ENCODE measurements at regions of chr4 and their contacts with region 1.

Region 1: GRCh38 chr4:128454281-128455075 is 166.9 kb upstream of the PGRMC2 start:
- DNase-seq: peak; percentile 76 to 84 (median 81)
- ATAC-seq: peak; percentile 72 to 93 (median 90)
- H3K4me3 ChIP-seq: peak overlapping the region in 2 of 12 donors; percentile 1
- H3K27ac ChIP-seq: peak overlapping the region in 1 of 12 donors; percentile 6
- H3K4me1 ChIP-seq: peaks cover 0 to 19% (median 10%) of the 10 kb centered on the region in 12 donors
- H3K27me3 ChIP-seq: no peaks in the 10 kb centered on the region
- CTCF ChIP-seq: peak; percentile 66 to 87 (median 81)
- POLR2A ChIP-seq: no peak

Region 2: GRCh38 chr4:128267745-128268144 is 186.7 kb before region 1 on chr4:
- intact Hi-C with region 1: no loop called
- DNase-seq: no peak
- ATAC-seq: no peak
- H3K4me3 ChIP-seq: no peak overlapping the region
- H3K27ac ChIP-seq: no peak overlapping the region
- H3K4me1 ChIP-seq: no peaks in the 10 kb centered on the region
- H3K27me3 ChIP-seq: no peaks in the 10 kb centered on the region
- CTCF ChIP-seq: no peak
- POLR2A ChIP-seq: no peak

Region 3: GRCh38 chr4:128524311-128524710 is 69.8 kb after region 1 on chr4:
- intact Hi-C with region 1: loop called in 1 of 10 experiments (anchors 2 kb)
- DNase-seq: peak in 3 of 5 donors; percentile 25 to 59 (median 44)
- ATAC-seq: peak in 2 of 4 donors; percentile 60 to 72
- H3K4me3 ChIP-seq: no peak overlapping the region
- H3K27ac ChIP-seq: peak overlapping the region in 8 of 12 donors; percentile 2 to 61 (median 30)
- H3K4me1 ChIP-seq: peaks cover 3 to 55% (median 26%) of the 10 kb centered on the region in 12 donors
- H3K27me3 ChIP-seq: no peaks in the 10 kb centered on the region
- CTCF ChIP-seq: no peak
- POLR2A ChIP-seq: no peak

Region 4: DNA sequence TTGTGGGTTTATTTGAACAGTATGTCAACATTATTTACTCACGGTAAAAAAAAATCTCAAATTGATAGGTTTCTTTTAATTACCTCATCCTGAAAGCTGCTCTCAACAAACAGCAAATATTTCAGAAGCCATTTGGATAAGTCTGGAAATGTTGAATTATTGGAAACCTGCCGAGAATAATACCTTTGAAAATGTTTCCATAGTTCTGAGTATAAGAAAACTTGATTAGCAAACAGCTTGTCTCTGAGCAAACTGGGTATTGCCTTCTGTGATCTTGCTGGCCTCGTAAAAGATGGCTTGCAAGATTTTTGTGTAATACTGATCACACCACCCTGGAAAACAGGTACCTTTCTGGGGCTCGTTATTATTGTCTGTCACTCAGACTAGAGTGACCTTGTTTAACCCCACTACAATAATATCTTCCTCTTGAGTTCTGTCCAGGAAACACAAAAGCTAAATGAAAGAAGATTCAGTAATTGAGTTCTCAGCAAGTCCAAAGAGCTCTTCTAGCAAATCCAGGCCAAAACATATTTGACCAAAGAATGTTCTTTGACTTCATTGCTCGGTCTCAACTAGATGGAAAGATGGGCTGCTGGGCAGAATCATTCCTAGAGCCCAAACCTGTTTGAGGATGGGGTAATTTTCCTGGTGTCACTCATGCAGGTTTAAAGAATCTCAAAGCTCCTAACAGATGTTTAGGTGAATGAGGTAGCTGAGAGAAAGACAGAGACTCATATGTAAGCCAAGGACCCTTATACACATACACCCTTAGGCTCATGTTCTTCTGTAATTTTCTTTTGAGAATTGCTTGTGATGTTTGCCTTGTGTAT is 99.4 kb after region 1 on chr4:
- intact Hi-C with region 1: loop called in 5 of 10 experiments (anchors 5 to 10 kb)
- DNase-seq: no peak
- ATAC-seq: peak in 2 of 4 donors; percentile 30 to 37
- H3K4me3 ChIP-seq: peak overlapping the region; percentile 21 to 73 (median 58)
- H3K27ac ChIP-seq: peak overlapping the region; percentile 80 to 95 (median 88)
- H3K4me1 ChIP-seq: peaks cover 0 to 17% (median 12%) of the 10 kb centered on the region in 12 donors
- H3K27me3 ChIP-seq: no peaks in the 10 kb centered on the region
- CTCF ChIP-seq: no peak
- POLR2A ChIP-seq: no peak

Region 5: DNA sequence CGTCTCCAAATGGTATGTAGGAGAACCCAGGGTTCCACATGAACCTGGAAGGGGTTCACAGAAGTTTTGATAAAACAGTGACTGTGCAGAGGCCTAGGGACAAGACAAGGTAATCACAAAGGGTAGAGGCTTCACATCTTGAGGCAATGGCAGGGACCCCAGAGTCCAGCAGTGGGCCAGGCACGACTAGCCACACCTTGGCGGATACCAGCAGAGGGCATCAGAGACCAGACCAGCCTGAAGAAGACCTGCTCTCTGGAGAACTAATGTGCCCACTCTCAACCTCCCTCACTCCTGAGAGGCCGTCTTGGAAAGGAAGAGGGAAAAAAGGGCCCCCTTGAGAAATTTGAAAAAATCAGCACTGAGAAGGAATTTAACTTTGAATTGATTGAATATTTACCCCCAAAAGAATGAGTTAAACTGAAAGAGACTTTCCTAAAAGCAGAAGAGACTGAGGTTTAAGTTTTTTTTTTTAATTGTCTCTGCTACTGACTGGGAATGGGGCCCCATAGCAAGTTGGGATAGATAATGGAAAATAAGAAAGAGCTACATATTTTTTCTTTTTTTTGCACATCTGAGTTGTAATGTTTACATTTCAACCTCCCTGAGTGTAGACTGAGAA is 111.2 kb after region 1 on chr4:
- intact Hi-C with region 1: loop called in 2 of 10 experiments (anchors 5 kb)
- DNase-seq: peak; percentile 35 to 68 (median 51)
- ATAC-seq: peak; percentile 65 to 81 (median 78)
- H3K4me3 ChIP-seq: no peak overlapping the region
- H3K27ac ChIP-seq: no peak overlapping the region
- H3K4me1 ChIP-seq: peaks cover 0 to 12% (median 0%) of the 10 kb centered on the region in 12 donors
- H3K27me3 ChIP-seq: no peaks in the 10 kb centered on the region
- CTCF ChIP-seq: peak; percentile 27 to 66 (median 57)
- POLR2A ChIP-seq: no peak

Region 6: DNA sequence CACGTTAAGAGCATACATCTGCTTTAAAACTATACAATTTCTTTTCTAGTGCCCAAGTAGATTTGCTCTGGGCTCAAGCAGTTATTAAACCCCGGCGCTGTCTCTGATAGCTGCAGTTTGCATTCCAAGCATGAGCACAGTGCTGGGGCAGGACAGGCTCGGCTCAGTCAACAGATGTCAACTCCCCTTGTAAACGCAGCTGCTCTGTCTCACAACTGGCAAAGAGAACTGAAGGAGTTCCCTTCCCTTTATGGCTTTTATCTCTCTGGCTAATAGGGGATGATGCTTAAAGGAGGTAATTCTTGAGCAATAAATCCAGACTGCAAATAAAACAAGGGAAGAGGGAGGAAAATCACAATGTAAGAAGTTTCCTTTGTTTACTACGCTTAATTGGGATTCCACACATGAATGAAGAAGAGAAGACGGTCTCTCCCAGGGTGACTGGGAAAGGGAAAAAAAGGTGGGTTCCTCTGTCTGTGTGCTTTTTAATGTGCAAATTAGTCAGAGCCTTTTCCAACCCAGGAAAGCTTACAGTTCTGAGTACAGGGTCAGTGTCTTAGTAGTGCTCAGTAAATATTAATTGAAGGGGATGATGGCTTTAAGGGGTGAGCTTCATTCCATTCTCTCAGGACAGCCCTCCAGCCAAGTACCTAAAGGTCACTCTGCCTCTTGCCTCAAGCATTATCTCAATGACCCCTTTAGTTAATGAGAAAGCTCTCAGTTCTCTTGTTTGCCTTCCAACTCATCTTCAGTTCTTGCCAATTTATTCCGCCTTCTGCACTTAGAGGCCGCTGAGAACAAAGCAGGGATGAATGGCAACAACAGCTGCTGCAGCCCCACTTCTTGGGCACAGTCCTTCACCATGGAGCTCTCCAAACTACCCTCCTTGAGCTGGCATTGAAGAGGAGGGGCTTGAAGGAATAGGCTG is 199.3 kb after region 1 on chr4:
- intact Hi-C with region 1: loop called in 1 of 10 experiments (anchors 10 kb)
- DNase-seq: peak in 4 of 5 donors; percentile 33 to 74 (median 58)
- ATAC-seq: peak; percentile 83 to 96 (median 94)
- H3K4me3 ChIP-seq: peak overlapping the region in 2 of 12 donors; percentile 18 to 23
- H3K27ac ChIP-seq: peak overlapping the region in 11 of 12 donors; percentile 27 to 79 (median 58)
- H3K4me1 ChIP-seq: peaks cover 0 to 39% (median 10%) of the 10 kb centered on the region in 12 donors
- H3K27me3 ChIP-seq: no peaks in the 10 kb centered on the region
- CTCF ChIP-seq: no peak
- POLR2A ChIP-seq: peak in 1 of 2 donors; percentile 18

Region 7: DNA sequence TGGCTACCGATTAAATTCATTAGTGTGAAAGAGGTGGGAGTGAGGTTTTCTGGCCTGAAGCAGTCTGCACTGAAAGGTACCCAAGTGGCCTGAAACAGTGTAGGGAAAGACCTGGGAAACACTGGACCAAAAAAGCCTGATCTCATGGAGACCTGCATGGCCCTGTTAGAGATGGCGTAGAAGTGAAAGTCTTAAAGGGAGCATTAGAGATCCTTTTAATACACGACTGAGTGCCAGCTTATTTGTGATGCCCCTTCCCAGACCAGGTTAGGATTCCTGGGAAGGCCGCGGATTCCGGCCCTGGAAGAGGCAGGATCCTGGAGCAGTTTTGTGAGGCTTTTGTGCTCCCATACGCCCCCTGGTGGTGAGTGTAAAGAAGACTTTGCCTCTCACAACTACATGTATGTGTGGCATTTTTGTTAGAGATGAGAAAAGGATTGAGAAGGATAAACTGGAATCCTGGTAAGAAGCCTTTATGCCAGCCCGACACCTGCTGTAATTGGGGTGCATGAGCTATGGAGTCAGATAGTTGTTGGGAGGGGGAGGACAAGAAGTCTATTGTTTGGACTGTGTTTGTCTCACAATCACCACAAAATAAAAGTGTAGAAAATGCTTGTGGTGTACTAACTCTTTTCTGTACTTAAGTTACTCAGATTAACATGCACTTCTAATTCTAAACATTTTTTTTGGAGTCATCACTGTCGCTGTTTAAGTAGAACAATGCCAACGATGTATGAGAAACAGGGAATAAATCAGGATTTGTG is 409.0 kb after region 1 on chr4:
- intact Hi-C with region 1: loop called (anchors 2 to 10 kb)
- DNase-seq: peak; percentile 75 to 81 (median 76)
- ATAC-seq: peak in 3 of 4 donors; percentile 66 to 68 (median 67)
- H3K4me3 ChIP-seq: no peak overlapping the region
- H3K27ac ChIP-seq: peak overlapping the region in 4 of 12 donors; percentile 16 to 42 (median 24)
- H3K4me1 ChIP-seq: peaks cover 0 to 45% (median 28%) of the 10 kb centered on the region in 12 donors
- H3K27me3 ChIP-seq: no peaks in the 10 kb centered on the region
- CTCF ChIP-seq: peak; percentile 80 to 95 (median 90)
- POLR2A ChIP-seq: no peak

Measured in heart left ventricle (tissue), 16 donors.